ENCODE measurements at regions of chr12 and their contacts with region 1.

Region 1: DNA sequence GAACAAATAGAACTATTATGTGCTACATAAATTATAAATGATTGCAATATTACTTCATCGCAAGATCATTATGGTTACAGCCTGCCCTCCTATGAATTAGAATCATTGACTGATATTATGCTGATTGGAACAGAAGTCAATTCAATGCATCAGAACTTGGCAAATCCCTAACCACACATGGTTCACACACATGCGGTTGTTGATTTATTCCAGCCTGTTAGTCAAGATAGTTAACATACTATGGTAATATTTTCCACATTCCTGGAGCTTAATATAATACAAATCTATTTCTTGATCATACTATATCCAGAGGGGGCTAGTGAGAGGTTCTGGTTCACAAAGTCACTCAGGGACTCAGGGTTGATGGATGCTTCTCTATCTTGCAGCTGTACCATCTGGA is 9.7 kb upstream of the CACNA1C start:
- DNase-seq: no peak
- ATAC-seq: no peak
- H3K4me3 ChIP-seq: no peak overlapping the region
- H3K27ac ChIP-seq: no peak overlapping the region
- H3K4me1 ChIP-seq: no peaks in the 10 kb centered on the region
- H3K27me3 ChIP-seq: peaks cover 14% of the 10 kb centered on the region
- CTCF ChIP-seq: no peak

Region 2: GRCh38 chr12:2013086-2013485 is 30.0 kb before region 1 on chr12:
- CTCF ChIA-PET with region 1: no interaction called
- POLR2A ChIA-PET with region 1: interaction called, 12 read pairs
- in situ Hi-C with region 1: no loop called
- intact Hi-C with region 1: no loop called
- DNase-seq: no peak
- ATAC-seq: no peak
- H3K4me3 ChIP-seq: no peak overlapping the region
- H3K27ac ChIP-seq: no peak overlapping the region
- H3K4me1 ChIP-seq: no peaks in the 10 kb centered on the region
- H3K27me3 ChIP-seq: no peaks in the 10 kb centered on the region
- CTCF ChIP-seq: no peak

Measured in Panc1 (cell line).